Activated naive CD4-positive, alpha-beta T cell treated with anti-CD3 and anti-CD28 coated beads, Interleukin-2, amount 10 ng/mL, durations not matched to agents 7 days and 5 days (primary cell): ENCODE measurements at regions of chr7 and their contacts with region 1.

Region 1: GRCh38 chr7:151244196-151244840 is 4.2 kb downstream of the SMARCD3 start:
- DNase-seq: peak; percentile 78
- H3K4me3 Mint-ChIP-seq: peak overlapping the region; percentile 66
- H3K27ac Mint-ChIP-seq: no peak overlapping the region
- H3K4me1 Mint-ChIP-seq: peaks cover 38% of the 10 kb centered on the region
- H3K27me3 Mint-ChIP-seq: peaks cover 48% of the 10 kb centered on the region

Region 2: GRCh38 chr7:151123822-151124464 is 120.4 kb before region 1 on chr7:
- CTCF ChIA-PET with region 1: interaction called, 24 read pairs
- DNase-seq: peak; percentile 88
- H3K4me3 Mint-ChIP-seq: no peak overlapping the region
- H3K27ac Mint-ChIP-seq: no peak overlapping the region
- H3K4me1 Mint-ChIP-seq: peaks cover 3% of the 10 kb centered on the region
- H3K27me3 Mint-ChIP-seq: peaks cover 12% of the 10 kb centered on the region

Region 3: GRCh38 chr7:151172273-151173141 is 71.8 kb before region 1 on chr7:
- CTCF ChIA-PET with region 1: interaction called, 10 read pairs
- DNase-seq: peak; percentile 79
- H3K4me3 Mint-ChIP-seq: no peak overlapping the region
- H3K27ac Mint-ChIP-seq: peak overlapping the region; percentile 33
- H3K4me1 Mint-ChIP-seq: peaks cover 10% of the 10 kb centered on the region
- H3K27me3 Mint-ChIP-seq: peaks cover 90% of the 10 kb centered on the region

Region 4: DNA sequence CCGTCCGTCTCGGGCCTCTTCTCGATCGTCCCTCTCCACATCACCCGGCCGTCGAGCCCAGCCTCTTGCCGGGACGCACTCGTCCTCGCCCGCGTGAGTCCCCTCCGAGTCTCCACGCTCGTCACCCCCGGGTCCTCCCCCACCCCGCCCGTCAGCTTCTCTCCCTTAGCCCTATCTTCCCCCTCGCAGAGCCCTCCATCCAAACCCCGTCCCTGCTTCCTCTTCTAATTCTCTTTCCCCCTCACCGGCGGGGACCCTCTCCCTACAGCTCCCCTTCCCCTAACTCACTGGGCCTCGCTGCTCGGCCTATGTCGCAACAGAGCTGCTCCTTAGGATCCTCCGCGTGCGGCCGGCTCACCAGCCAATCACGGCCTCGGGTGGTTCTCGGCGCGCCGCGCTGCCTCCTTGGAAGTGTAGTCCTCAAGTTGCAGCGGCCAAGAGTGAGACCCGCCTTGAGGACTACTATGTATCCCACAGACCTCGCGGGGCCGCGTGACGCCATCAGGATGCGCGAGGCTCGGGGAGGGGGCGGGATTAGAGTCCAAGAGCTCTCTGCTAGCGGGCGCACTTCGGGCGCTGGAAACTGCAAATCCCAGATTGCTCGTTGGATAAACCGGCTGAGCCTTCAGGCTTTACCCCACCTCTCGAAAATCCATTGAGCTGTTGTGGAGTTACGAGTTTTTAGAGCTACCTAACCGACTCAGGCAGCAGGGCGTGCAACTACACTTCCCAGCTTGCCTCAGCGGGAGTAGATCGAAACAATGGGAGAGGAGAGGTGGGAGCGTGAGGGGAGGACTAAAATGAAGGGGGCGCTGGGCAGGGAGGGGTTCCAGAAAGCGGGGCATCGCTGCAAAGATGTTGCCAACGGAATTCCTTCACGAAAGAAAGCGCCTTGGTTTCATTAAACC is 17.2 kb before region 1 on chr7 and contains the start of gene ABCF2:
- CTCF ChIA-PET with region 1: interaction called, 39 read pairs
- DNase-seq: peak; percentile 99
- H3K4me3 Mint-ChIP-seq: peak within 1 kb of the TSS; percentile 97
- H3K27ac Mint-ChIP-seq: peak within 1 kb of the TSS; percentile 89
- H3K4me1 Mint-ChIP-seq: peaks cover 46% of the 10 kb centered on the region
- H3K27me3 Mint-ChIP-seq: peaks cover 17% of the 10 kb centered on the region

Region 5: DNA sequence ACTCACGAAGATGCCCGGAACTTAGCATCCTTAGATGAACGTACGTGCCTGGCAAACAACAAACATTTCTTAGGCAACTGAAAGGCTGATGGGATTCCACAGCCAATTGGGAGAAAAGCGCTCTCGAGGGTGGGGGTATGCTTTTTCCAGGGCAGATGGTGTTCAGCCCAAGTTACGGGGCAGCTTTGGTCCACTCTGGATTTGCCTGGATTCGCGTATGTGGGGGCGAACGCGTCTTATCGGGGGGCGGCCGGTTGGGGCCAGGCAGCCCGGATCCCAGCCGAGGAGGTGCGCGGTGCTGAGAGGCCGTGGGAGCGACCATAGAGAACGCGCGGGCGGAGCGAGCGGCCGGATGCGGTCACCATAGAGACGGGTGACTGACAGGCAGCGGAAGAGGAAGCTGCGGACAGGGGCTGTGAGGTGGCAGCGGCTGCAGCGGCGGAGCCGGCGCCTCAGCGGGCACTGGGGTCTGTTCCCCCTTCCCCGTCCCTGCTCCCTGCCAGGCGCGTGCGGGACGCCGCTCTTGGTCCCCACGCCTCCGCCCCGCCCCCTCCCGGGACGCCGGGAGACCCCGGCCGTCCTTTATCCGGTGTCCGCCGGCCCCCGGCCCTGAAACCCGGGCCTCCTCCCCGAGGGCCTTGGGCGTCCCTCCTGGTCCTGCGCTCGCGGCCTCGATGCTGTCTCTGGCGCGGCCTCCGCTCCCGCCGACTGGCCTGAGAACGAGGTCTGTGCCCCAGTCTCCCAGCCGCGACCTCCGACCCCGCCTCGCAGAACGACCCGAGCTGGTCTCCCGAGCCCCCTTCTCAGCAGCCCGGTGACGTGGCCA is 12.0 kb before region 1 on chr7 and contains the start of gene CHPF2:
- CTCF ChIA-PET with region 1: interaction called, 39 read pairs
- DNase-seq: peak; percentile 95
- H3K4me3 Mint-ChIP-seq: peak within 1 kb of the TSS; percentile 100
- H3K27ac Mint-ChIP-seq: peak within 1 kb of the TSS; percentile 98
- H3K4me1 Mint-ChIP-seq: peaks cover 44% of the 10 kb centered on the region
- H3K27me3 Mint-ChIP-seq: peaks cover 19% of the 10 kb centered on the region

Region 6: GRCh38 chr7:151256410-151257045 is 12.2 kb after region 1 on chr7:
- CTCF ChIA-PET with region 1: interaction called, 14 read pairs
- DNase-seq: no peak
- H3K4me3 Mint-ChIP-seq: no peak overlapping the region
- H3K27ac Mint-ChIP-seq: no peak overlapping the region
- H3K4me1 Mint-ChIP-seq: no peaks in the 10 kb centered on the region
- H3K27me3 Mint-ChIP-seq: peaks cover 88% of the 10 kb centered on the region

Region 7: GRCh38 chr7:151304856-151305255 is 60.5 kb after region 1 on chr7:
- CTCF ChIA-PET with region 1: interaction called, 21 read pairs
- DNase-seq: no peak
- H3K4me3 Mint-ChIP-seq: peak overlapping the region; percentile 8
- H3K27ac Mint-ChIP-seq: no peak overlapping the region
- H3K4me1 Mint-ChIP-seq: peaks cover 15% of the 10 kb centered on the region
- H3K27me3 Mint-ChIP-seq: peaks cover 82% of the 10 kb centered on the region